PC-3 (cell line): ENCODE measurements at regions of chr13 and their contacts with region 1.

Region 1: DNA sequence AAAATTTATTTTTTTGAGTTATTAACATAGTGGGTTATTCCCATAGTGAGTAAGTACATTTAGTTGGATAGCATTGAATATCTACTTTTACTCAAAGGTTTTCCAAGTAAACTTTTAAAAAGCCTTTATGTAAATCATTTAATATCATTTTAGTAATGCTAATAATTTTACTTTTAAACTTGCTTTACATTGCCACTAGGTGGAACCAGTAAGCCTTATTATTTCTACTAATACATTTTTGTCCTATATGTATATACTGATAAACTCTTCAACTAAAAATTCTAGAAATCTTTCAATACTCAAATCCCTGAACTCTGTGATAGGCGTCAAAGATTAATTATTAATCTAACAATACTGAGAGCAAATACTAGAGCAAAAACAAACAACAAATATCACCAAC is 1709.2 kb upstream of the PCDH20 start:
- DNase-seq: peak; percentile 36
- ATAC-seq: no peak
- H3K4me3 ChIP-seq: no peak overlapping the region
- H3K27ac ChIP-seq: no peak overlapping the region
- H3K4me1 ChIP-seq: no peaks in the 10 kb centered on the region
- H3K27me3 ChIP-seq: no peaks in the 10 kb centered on the region
- CTCF ChIP-seq: peak; percentile 57

Region 2: GRCh38 chr13:62387647-62388046 is 737.2 kb before region 1 on chr13:
- CTCF ChIA-PET with region 1: no interaction called
- POLR2A ChIA-PET with region 1: no interaction called
- intact Hi-C with region 1: loop called (anchors 5 kb)
- DNase-seq: peak; percentile 29
- ATAC-seq: no peak; the same call in 1 of the 2 replicates
- H3K4me3 ChIP-seq: no peak overlapping the region
- H3K27ac ChIP-seq: no peak overlapping the region
- H3K4me1 ChIP-seq: no peaks in the 10 kb centered on the region
- H3K27me3 ChIP-seq: no peaks in the 10 kb centered on the region
- CTCF ChIP-seq: peak; percentile 46; the same call in 1 of the 2 replicates

Region 3: GRCh38 chr13:62512194-62513141 is 612.4 kb before region 1 on chr13:
- CTCF ChIA-PET with region 1: no interaction called
- POLR2A ChIA-PET with region 1: no interaction called
- intact Hi-C with region 1: loop called (anchors 10 kb)
- DNase-seq: peak; percentile 58
- ATAC-seq: peak; percentile 88
- H3K4me3 ChIP-seq: no peak overlapping the region
- H3K27ac ChIP-seq: no peak overlapping the region
- H3K4me1 ChIP-seq: no peaks in the 10 kb centered on the region
- H3K27me3 ChIP-seq: no peaks in the 10 kb centered on the region
- CTCF ChIP-seq: peak; percentile 72

Region 4: GRCh38 chr13:62973804-62974203 is 151.1 kb before region 1 on chr13:
- CTCF ChIA-PET with region 1: no interaction called
- POLR2A ChIA-PET with region 1: no interaction called
- intact Hi-C with region 1: no loop called
- DNase-seq: no peak
- ATAC-seq: no peak
- H3K4me3 ChIP-seq: no peak overlapping the region
- H3K27ac ChIP-seq: no peak overlapping the region
- H3K4me1 ChIP-seq: no peaks in the 10 kb centered on the region
- H3K27me3 ChIP-seq: no peaks in the 10 kb centered on the region
- CTCF ChIP-seq: no peak

Region 5: GRCh38 chr13:63636316-63636993 is 511.6 kb after region 1 on chr13:
- CTCF ChIA-PET with region 1: no interaction called
- POLR2A ChIA-PET with region 1: no interaction called
- intact Hi-C with region 1: loop called (anchors 5 kb)
- DNase-seq: peak; percentile 9
- ATAC-seq: peak; percentile 74
- H3K4me3 ChIP-seq: peak overlapping the region; percentile 69
- H3K27ac ChIP-seq: no peak overlapping the region
- H3K4me1 ChIP-seq: no peaks in the 10 kb centered on the region
- H3K27me3 ChIP-seq: no peaks in the 10 kb centered on the region
- CTCF ChIP-seq: peak; percentile 47; the same call in 1 of the 2 replicates

Region 6: GRCh38 chr13:63680704-63681103 is 555.8 kb after region 1 on chr13:
- CTCF ChIA-PET with region 1: no interaction called
- POLR2A ChIA-PET with region 1: no interaction called
- intact Hi-C with region 1: loop called (anchors 10 kb)
- DNase-seq: no peak
- ATAC-seq: no peak
- H3K4me3 ChIP-seq: no peak overlapping the region
- H3K27ac ChIP-seq: no peak overlapping the region
- H3K4me1 ChIP-seq: 0 out of 2 replicates have a peak, but pooled peaks cover 3% of the 10 kb centered on the region
- H3K27me3 ChIP-seq: no peaks in the 10 kb centered on the region
- CTCF ChIP-seq: no peak